ENCODE measurements at regions of chr7 and their contacts with region 1.

Region 1: GRCh38 chr7:24587848-24588247 is 14.6 kb downstream of the PALS2 start:
- DNase-seq: peak; percentile 69
- ATAC-seq: peak; percentile 67
- H3K4me3 ChIP-seq: no peak overlapping the region
- H3K4me3 Mint-ChIP-seq: no peak overlapping the region
- H3K27ac ChIP-seq: no peak overlapping the region
- H3K27ac Mint-ChIP-seq: no peak overlapping the region
- H3K4me1 ChIP-seq: no peaks in the 10 kb centered on the region
- H3K4me1 Mint-ChIP-seq: peaks cover 26% of the 10 kb centered on the region
- H3K27me3 ChIP-seq: no peaks in the 10 kb centered on the region
- H3K27me3 Mint-ChIP-seq: no peaks in the 10 kb centered on the region
- CTCF ChIP-seq: peak; percentile 79

Region 2: GRCh38 chr7:23546897-23547572 is 1040.8 kb before region 1 on chr7:
- CTCF ChIA-PET with region 1: no interaction called
- POLR2A ChIA-PET with region 1: no interaction called
- intact Hi-C with region 1: loop called (anchors 1 kb)
- DNase-seq: peak; percentile 90
- ATAC-seq: peak; percentile 91
- H3K4me3 ChIP-seq: peak overlapping the region in 1 of 5 experiments; percentile 18
- H3K4me3 Mint-ChIP-seq: no peak overlapping the region
- H3K27ac ChIP-seq: no peak overlapping the region
- H3K27ac Mint-ChIP-seq: no peak overlapping the region
- H3K4me1 ChIP-seq: peaks cover 8 to 13% of the 10 kb centered on the region in 2 donors
- H3K4me1 Mint-ChIP-seq: peaks cover 15% of the 10 kb centered on the region
- H3K27me3 ChIP-seq: no peaks in the 10 kb centered on the region
- H3K27me3 Mint-ChIP-seq: no peaks in the 10 kb centered on the region
- CTCF ChIP-seq: peak; percentile 98

Region 3: GRCh38 chr7:23570592-23571200 is 1017.2 kb before region 1 on chr7:
- CTCF ChIA-PET with region 1: interaction called, 6 read pairs
- POLR2A ChIA-PET with region 1: no interaction called
- intact Hi-C with region 1: loop called (anchors 5 kb)
- DNase-seq: peak; percentile 77
- ATAC-seq: peak; percentile 91
- H3K4me3 ChIP-seq: no peak overlapping the region
- H3K4me3 Mint-ChIP-seq: peak overlapping the region; percentile 57
- H3K27ac ChIP-seq: no peak overlapping the region
- H3K27ac Mint-ChIP-seq: no peak overlapping the region
- H3K4me1 ChIP-seq: no peaks in the 10 kb centered on the region
- H3K4me1 Mint-ChIP-seq: peaks cover 3% of the 10 kb centered on the region
- H3K27me3 ChIP-seq: peaks cover 0 to 4% (median 0%) of the 10 kb centered on the region in 4 experiments
- H3K27me3 Mint-ChIP-seq: peaks cover 10% of the 10 kb centered on the region
- CTCF ChIP-seq: peak; percentile 84

Region 4: DNA sequence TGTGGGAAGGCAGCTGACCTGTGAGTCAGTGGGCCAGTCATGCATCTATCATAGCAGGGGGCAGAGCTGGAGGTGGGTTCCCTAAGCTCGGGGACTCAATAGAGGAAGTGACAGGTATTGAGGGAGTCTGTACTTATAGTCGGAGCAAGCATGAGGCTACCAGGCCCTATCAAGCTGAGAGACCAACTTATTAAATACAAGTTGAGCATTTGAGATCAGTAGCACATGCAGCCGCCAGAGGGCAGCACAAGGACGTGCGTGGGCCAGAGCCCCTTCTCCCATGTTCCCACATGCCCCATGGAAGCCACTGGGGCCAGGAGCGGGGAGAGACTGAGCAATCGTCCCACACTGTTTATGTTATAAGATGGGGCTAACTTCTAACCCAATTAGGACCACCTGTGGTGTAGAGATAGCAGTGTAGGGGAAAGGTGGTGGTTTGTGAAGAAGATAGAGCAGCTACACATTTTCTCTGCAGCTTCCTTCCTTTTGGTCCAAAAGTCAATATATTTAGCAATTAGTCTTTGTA is 890.9 kb before region 1 on chr7:
- CTCF ChIA-PET with region 1: interaction called, 3 read pairs
- POLR2A ChIA-PET with region 1: no interaction called
- intact Hi-C with region 1: loop called (anchors 5 kb)
- DNase-seq: peak; percentile 67
- ATAC-seq: peak; percentile 45
- H3K4me3 ChIP-seq: no peak overlapping the region
- H3K4me3 Mint-ChIP-seq: no peak overlapping the region
- H3K27ac ChIP-seq: no peak overlapping the region
- H3K27ac Mint-ChIP-seq: no peak overlapping the region
- H3K4me1 ChIP-seq: no peaks in the 10 kb centered on the region
- H3K4me1 Mint-ChIP-seq: peaks cover 2% of the 10 kb centered on the region
- H3K27me3 ChIP-seq: no peaks in the 10 kb centered on the region
- H3K27me3 Mint-ChIP-seq: no peaks in the 10 kb centered on the region
- CTCF ChIP-seq: peak; percentile 85

Region 5: GRCh38 chr7:24290004-24290641 is 297.7 kb before region 1 on chr7:
- CTCF ChIA-PET with region 1: no interaction called
- POLR2A ChIA-PET with region 1: no interaction called
- intact Hi-C with region 1: loop called (anchors 1 kb)
- DNase-seq: peak; percentile 64
- ATAC-seq: peak; percentile 86
- H3K4me3 ChIP-seq: no peak overlapping the region
- H3K4me3 Mint-ChIP-seq: no peak overlapping the region
- H3K27ac ChIP-seq: no peak overlapping the region
- H3K27ac Mint-ChIP-seq: no peak overlapping the region
- H3K4me1 ChIP-seq: peaks cover 8 to 10% of the 10 kb centered on the region in 2 donors
- H3K4me1 Mint-ChIP-seq: peaks cover 12% of the 10 kb centered on the region
- H3K27me3 ChIP-seq: peaks cover 0 to 19% (median 12%) of the 10 kb centered on the region in 4 experiments
- H3K27me3 Mint-ChIP-seq: peaks cover 40% of the 10 kb centered on the region
- CTCF ChIP-seq: peak; percentile 41

Region 6: DNA sequence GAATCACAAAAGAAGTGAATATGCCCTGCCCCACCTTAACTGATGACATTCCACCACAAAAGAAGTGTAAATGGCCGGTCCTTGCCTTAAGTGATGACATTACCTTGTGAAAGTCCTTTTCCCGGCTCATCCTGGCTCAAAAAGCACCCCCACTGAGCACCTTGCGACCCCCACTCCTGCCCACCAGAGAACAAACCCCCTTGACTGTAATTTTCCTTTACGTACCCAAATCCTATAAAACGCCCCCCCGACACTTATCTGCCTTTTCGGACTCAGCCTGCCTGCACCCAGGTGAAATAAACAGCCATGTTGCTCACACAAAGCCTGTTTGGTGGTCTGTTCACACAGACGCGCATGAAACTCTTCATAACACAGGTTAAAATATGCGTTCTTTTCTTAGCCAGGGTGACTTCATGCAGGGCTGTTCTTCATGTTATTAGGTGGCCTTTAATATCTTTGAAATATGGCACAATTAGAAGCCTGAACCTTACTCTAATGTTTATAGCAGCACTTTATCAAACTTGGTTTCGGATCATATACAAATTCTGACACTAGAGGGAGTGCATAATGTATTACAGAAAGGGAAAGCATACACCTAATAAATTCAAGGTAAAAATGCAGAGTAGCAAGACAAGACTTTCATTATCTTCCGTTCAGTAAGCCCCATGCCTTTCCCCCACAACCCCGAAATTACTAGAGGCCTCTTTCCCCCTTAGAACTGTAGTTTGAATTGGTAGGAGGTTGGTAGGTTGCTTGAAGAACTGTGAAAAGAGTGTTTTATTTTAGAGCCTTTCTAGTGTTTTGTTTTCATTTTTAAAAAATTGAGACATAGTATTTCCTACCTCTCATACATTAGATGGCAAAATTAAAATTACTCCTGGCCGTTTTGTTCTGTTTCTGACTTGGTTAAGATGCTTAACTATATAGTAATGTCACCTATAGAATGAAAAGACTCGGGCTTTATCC is 185.9 kb before region 1 on chr7:
- CTCF ChIA-PET with region 1: no interaction called
- POLR2A ChIA-PET with region 1: no interaction called
- intact Hi-C with region 1: loop called (anchors 1 kb)
- DNase-seq: peak; percentile 32
- ATAC-seq: no peak
- H3K4me3 ChIP-seq: no peak overlapping the region
- H3K4me3 Mint-ChIP-seq: no peak overlapping the region
- H3K27ac ChIP-seq: no peak overlapping the region
- H3K27ac Mint-ChIP-seq: no peak overlapping the region
- H3K4me1 ChIP-seq: peaks cover 5 to 6% of the 10 kb centered on the region in 2 donors
- H3K4me1 Mint-ChIP-seq: peaks cover 11% of the 10 kb centered on the region
- H3K27me3 ChIP-seq: no peaks in the 10 kb centered on the region
- H3K27me3 Mint-ChIP-seq: peaks cover 5% of the 10 kb centered on the region
- CTCF ChIP-seq: peak; percentile 43

Region 7: DNA sequence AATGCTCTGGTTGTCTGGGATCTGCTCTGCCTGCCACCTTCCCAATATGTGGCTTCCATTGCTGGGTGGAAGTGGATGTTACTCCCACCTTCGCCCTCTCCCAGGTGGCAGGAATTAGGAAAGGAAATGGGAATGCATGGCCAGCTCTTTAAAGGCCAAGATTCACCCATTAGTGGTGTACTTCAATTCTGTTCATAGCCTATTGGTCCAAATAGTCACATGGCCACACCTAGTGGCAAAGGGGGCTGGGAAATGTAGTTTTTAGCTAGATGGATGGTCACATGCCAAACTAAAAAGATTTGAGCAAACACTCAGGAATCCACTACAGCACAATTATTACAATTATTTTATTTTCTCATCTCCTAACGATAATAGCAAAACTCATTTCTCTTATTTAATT is 168.8 kb before region 1 on chr7:
- CTCF ChIA-PET with region 1: no interaction called
- POLR2A ChIA-PET with region 1: no interaction called
- intact Hi-C with region 1: no loop called
- DNase-seq: no peak
- ATAC-seq: no peak
- H3K4me3 ChIP-seq: no peak overlapping the region
- H3K4me3 Mint-ChIP-seq: no peak overlapping the region
- H3K27ac ChIP-seq: no peak overlapping the region
- H3K27ac Mint-ChIP-seq: no peak overlapping the region
- H3K4me1 ChIP-seq: no peaks in the 10 kb centered on the region
- H3K4me1 Mint-ChIP-seq: no peaks in the 10 kb centered on the region
- H3K27me3 ChIP-seq: no peaks in the 10 kb centered on the region
- H3K27me3 Mint-ChIP-seq: peaks cover 4% of the 10 kb centered on the region
- CTCF ChIP-seq: no peak

Region 8: DNA sequence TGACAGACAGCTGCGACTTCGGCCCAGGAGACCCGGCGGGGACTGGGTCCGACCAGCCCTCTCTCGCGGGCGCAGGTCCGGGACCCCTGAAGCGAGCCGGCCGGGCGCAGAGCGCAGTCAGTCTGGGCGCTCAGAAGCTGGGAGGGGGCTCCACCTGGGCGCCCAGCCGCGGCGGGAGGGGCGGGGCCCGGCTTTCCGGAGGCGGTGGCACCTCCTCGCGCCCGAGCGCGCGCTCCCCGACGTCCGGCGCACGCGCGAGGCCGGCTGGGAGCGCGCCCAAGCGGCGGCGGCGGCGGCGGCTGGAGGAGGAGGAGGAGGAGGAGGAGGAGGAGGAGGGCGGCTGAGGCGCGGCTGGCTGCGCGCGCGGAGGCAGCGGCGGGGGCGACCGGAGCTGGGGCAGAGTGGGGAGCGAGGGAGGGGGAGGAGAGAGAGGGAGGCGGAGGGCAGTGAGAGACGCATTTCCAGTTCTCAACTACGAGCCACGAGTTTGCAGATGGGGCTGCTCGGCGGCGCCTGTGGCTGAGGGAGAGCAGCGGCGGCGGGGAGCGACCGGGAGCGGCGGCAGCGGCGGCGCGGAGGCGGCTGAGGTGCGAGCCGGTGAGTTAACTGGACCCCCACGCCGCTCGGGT is 14.7 kb before region 1 on chr7 and contains the start of gene PALS2:
- CTCF ChIA-PET with region 1: interaction called, 12 read pairs
- POLR2A ChIA-PET with region 1: no interaction called
- intact Hi-C with region 1: no loop called
- DNase-seq: peak; percentile 90
- ATAC-seq: peak; percentile 79
- H3K4me3 ChIP-seq: peak within 1 kb of the TSS; percentile 63 to 88 (median 84)
- H3K4me3 Mint-ChIP-seq: peak within 1 kb of the TSS; percentile 91
- H3K27ac ChIP-seq: peak within 1 kb of the TSS; percentile 70 to 73
- H3K27ac Mint-ChIP-seq: peak within 1 kb of the TSS; percentile 89
- H3K4me1 ChIP-seq: peaks cover 24 to 29% of the 10 kb centered on the region in 2 donors
- H3K4me1 Mint-ChIP-seq: peaks cover 37% of the 10 kb centered on the region
- H3K27me3 ChIP-seq: peaks cover 0 to 3% (median 0%) of the 10 kb centered on the region in 4 experiments
- H3K27me3 Mint-ChIP-seq: peaks cover 5% of the 10 kb centered on the region
- CTCF ChIP-seq: no peak
- total RNA-seq, gene PALS2: 47.8 and 54.2 TPM in 2 replicates

Region 9: DNA sequence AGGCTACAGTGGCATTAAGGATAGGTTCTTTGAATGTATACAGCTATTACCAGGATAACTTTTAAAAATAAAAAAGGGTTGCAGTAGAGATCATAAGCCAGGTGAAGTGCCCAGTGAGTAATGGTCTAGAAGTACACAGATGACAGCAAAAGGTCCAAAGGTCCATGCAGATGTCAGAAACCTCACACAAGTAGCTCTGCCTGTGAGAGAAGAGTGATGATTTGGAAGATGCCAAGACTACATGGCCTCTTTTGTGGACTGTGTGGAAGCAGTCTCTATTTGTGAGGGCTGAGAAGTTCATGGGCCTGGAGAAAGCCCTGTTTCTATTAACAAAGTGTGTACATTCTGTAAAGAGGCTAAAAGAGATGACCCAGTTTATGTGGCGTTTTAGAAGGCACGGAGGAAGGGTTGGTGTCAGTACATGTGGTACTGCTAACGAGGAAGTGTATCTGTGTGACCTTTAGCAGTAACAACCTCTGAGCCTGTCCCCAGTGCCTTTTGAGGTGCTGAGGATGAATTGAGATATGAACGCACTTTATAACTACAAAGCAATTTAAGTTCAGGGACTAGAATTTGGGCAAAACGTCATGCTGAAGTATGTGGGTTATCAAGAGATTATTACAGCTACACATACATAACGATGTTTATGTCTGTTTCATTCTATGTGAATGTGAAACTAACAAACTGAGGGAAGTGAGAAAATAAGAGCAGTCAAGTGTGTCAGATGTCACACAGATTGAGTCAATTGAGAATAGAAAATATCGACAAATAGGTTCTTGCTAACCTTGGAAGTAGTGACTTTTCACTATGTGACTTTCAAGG is 529.6 kb after region 1 on chr7:
- CTCF ChIA-PET with region 1: no interaction called
- POLR2A ChIA-PET with region 1: no interaction called
- intact Hi-C with region 1: no loop called
- DNase-seq: peak; percentile 81
- ATAC-seq: peak; percentile 89
- H3K4me3 ChIP-seq: peak overlapping the region; percentile 12 to 54 (median 40)
- H3K4me3 Mint-ChIP-seq: peak overlapping the region; percentile 87
- H3K27ac ChIP-seq: peak overlapping the region; percentile 71 to 82
- H3K27ac Mint-ChIP-seq: peak overlapping the region; percentile 97
- H3K4me1 ChIP-seq: peaks cover 27% of the 10 kb centered on the region in 2 donors
- H3K4me1 Mint-ChIP-seq: peaks cover 41% of the 10 kb centered on the region
- H3K27me3 ChIP-seq: no peaks in the 10 kb centered on the region
- H3K27me3 Mint-ChIP-seq: no peaks in the 10 kb centered on the region
- CTCF ChIP-seq: no peak

Measured in B cell (primary cell).